ENCODE measurements at regions of chr16 and their contacts with region 1.

Region 1: GRCh38 chr16:17798716-17799115 is 328.0 kb upstream of the XYLT1 start:
- DNase-seq: no peak
- ATAC-seq: no peak
- H3K4me3 ChIP-seq: no peak overlapping the region
- H3K27ac ChIP-seq: no peak overlapping the region
- H3K4me1 ChIP-seq: peaks cover 2% of the 10 kb centered on the region
- H3K27me3 ChIP-seq: no peaks in the 10 kb centered on the region
- CTCF ChIP-seq: no peak
- POLR2A ChIP-seq: no peak
- RAD21 ChIP-seq: no peak

Region 2: GRCh38 chr16:17668386-17668785 is 130.3 kb before region 1 on chr16:
- CTCF ChIA-PET with region 1: no interaction called
- POLR2A ChIA-PET with region 1: no interaction called
- dilution Hi-C with region 1: no loop called
- in situ Hi-C with region 1: no loop called
- intact Hi-C with region 1: loop called (anchors 10 kb)
- DNase-seq: no peak
- ATAC-seq: no peak
- H3K4me3 ChIP-seq: no peak overlapping the region
- H3K27ac ChIP-seq: no peak overlapping the region
- H3K4me1 ChIP-seq: no peaks in the 10 kb centered on the region
- H3K27me3 ChIP-seq: no peaks in the 10 kb centered on the region
- CTCF ChIP-seq: no peak
- POLR2A ChIP-seq: no peak
- RAD21 ChIP-seq: no peak

Measured in IMR-90 (cell line).